ENCODE measurements at regions of chr11 and their contacts with region 1.

Region 1: GRCh38 chr11:126440792-126441514 is 85.5 kb downstream of the ST3GAL4 start:
- DNase-seq: peak; percentile 77
- ATAC-seq: peak; percentile 69
- H3K4me3 ChIP-seq: no peak overlapping the region
- H3K4me3 Mint-ChIP-seq: no peak overlapping the region
- H3K27ac ChIP-seq: no peak overlapping the region
- H3K27ac Mint-ChIP-seq: no peak overlapping the region
- H3K4me1 ChIP-seq: peaks cover 0 to 5% of the 10 kb centered on the region in 2 donors
- H3K4me1 Mint-ChIP-seq: peaks cover 2% of the 10 kb centered on the region
- H3K27me3 ChIP-seq: peaks cover 0 to 16% (median 3%) of the 10 kb centered on the region in 4 experiments
- H3K27me3 Mint-ChIP-seq: peaks cover 14% of the 10 kb centered on the region
- CTCF ChIP-seq: peak; percentile 94

Region 2: GRCh38 chr11:127345819-127346459 is 905.0 kb after region 1 on chr11:
- CTCF ChIA-PET with region 1: interaction called, 10 read pairs
- POLR2A ChIA-PET with region 1: no interaction called
- intact Hi-C with region 1: no loop called
- DNase-seq: peak; percentile 15
- ATAC-seq: no peak
- H3K4me3 ChIP-seq: no peak overlapping the region
- H3K4me3 Mint-ChIP-seq: no peak overlapping the region
- H3K27ac ChIP-seq: no peak overlapping the region
- H3K27ac Mint-ChIP-seq: no peak overlapping the region
- H3K4me1 ChIP-seq: no peaks in the 10 kb centered on the region
- H3K4me1 Mint-ChIP-seq: no peaks in the 10 kb centered on the region
- H3K27me3 ChIP-seq: no peaks in the 10 kb centered on the region
- H3K27me3 Mint-ChIP-seq: no peaks in the 10 kb centered on the region
- CTCF ChIP-seq: peak; percentile 63

Region 3: DNA sequence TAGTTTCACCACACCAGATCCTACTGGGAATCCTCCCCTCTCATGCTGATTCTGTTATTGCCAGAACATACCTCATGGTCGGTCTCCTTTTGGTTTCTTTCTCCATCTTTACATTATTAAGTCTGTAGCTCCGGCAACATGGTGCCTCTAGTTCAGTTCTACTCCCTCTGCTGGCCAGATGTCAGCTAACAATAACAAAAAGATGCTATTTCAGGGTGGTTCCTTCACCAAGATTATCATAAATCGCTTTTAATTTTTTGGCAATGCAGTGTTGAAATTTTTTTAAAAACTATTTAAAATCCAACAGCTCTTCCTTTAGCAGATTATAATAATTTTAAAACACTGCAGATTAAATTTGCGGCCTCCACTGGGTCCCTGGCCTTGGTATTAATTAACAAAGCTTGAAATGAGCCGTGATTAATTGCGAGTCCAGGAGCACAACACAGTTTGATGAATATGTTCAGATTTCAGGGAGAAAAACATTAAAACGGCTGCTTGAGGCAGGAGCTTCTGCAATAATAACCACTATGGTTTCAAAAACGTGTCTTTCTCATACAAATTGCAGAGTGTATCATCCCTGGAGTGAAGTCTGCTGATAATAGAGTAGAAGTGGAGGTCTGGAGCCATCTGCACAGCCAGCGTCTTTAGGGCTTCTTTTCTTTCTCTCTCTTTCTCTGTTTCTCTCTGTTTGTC is 1052.5 kb after region 1 on chr11:
- CTCF ChIA-PET with region 1: interaction called, 4 read pairs
- POLR2A ChIA-PET with region 1: no interaction called
- intact Hi-C with region 1: loop called (anchors 5 kb)
- DNase-seq: no peak
- ATAC-seq: no peak
- H3K4me3 ChIP-seq: no peak overlapping the region
- H3K4me3 Mint-ChIP-seq: no peak overlapping the region
- H3K27ac ChIP-seq: no peak overlapping the region
- H3K27ac Mint-ChIP-seq: no peak overlapping the region
- H3K4me1 ChIP-seq: no peaks in the 10 kb centered on the region
- H3K4me1 Mint-ChIP-seq: no peaks in the 10 kb centered on the region
- H3K27me3 ChIP-seq: no peaks in the 10 kb centered on the region
- H3K27me3 Mint-ChIP-seq: no peaks in the 10 kb centered on the region
- CTCF ChIP-seq: no peak

Region 4: GRCh38 chr11:128039140-128040021 is 1598.4 kb after region 1 on chr11:
- CTCF ChIA-PET with region 1: no interaction called
- POLR2A ChIA-PET with region 1: no interaction called
- intact Hi-C with region 1: loop called (anchors 5 kb)
- DNase-seq: peak; percentile 43
- ATAC-seq: peak; percentile 66
- H3K4me3 ChIP-seq: no peak overlapping the region
- H3K4me3 Mint-ChIP-seq: no peak overlapping the region
- H3K27ac ChIP-seq: no peak overlapping the region
- H3K27ac Mint-ChIP-seq: no peak overlapping the region
- H3K4me1 ChIP-seq: peaks cover 19 to 20% of the 10 kb centered on the region in 2 donors
- H3K4me1 Mint-ChIP-seq: peaks cover 17% of the 10 kb centered on the region
- H3K27me3 ChIP-seq: peaks cover 0 to 9% (median 4%) of the 10 kb centered on the region in 4 experiments
- H3K27me3 Mint-ChIP-seq: peaks cover 16% of the 10 kb centered on the region
- CTCF ChIP-seq: no peak

Measured in B cell (primary cell).